Heart right ventricle (tissue), 16 donors: ENCODE measurements at regions of chr6 and their contacts with region 1.

Region 1: GRCh38 chr6:1604158-1605030 is 5.3 kb upstream of the FOXC1 start:
- DNase-seq: peak in 1 of 2 donors; percentile 80
- ATAC-seq: peak; percentile 90 to 94 (median 92)
- H3K4me3 ChIP-seq: peak overlapping the region; percentile 0 to 66 (median 58)
- H3K27ac ChIP-seq: no peak overlapping the region
- H3K4me1 ChIP-seq: peaks cover 3 to 46% (median 22%) of the 10 kb centered on the region in 9 donors
- H3K27me3 ChIP-seq: peaks cover 16 to 99% (median 79%) of the 10 kb centered on the region in 7 donors
- CTCF ChIP-seq: peak; percentile 89 to 99 (median 98)

Region 2: DNA sequence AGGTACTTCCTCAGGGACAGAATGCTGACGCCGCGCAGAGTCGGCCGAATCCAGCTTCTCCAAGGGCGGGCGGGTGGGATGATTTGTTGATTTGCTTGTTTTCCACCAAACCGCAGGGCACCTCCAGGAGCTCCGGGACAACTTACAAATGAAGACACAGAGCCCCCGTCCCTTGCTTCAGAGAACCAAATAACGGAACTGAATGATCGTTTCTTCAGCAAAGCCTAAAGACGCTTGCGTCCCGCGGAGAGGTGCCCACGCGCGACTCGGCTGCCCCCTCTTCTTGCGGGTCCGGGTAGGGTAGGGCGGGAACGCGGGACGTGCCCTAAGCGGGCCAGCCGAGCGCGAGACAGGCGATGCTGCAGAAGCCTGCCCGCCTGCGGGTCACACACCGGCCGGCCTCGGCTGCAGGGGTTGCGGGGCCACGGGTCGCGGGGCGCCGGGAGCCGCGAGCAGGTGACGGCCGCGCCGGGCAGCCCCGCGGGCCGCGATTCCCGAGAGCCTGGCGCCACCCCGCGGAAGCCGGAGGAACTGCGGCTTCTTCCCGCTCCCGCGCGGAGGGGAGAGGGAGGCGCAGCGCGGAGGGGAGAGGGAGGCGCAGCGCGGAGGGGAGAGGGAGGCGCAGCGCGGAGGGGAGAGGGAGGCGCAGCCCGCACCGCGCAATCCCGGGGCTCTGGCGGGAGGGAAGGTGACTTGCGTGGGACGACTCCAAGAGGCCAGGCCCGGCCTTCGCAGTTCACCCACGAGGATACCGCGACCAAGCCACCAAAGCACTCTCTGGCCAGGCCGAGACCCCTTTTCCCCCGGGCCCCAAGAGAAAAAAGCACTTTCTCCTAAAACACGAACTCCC is 222.7 kb before region 1 on chr6:
- intact Hi-C with region 1: no loop called
- DNase-seq: peak; percentile 29 to 55
- ATAC-seq: peak; percentile 77 to 88 (median 85)
- H3K4me3 ChIP-seq: peak overlapping the region in 9 of 10 donors; percentile 16 to 39 (median 31)
- H3K27ac ChIP-seq: no peak overlapping the region
- H3K4me1 ChIP-seq: peaks cover 8 to 59% (median 40%) of the 10 kb centered on the region in 9 donors
- H3K27me3 ChIP-seq: peaks cover 67 to 100% (median 100%) of the 10 kb centered on the region in 7 donors
- CTCF ChIP-seq: peak; percentile 68 to 93 (median 83)

Region 3: DNA sequence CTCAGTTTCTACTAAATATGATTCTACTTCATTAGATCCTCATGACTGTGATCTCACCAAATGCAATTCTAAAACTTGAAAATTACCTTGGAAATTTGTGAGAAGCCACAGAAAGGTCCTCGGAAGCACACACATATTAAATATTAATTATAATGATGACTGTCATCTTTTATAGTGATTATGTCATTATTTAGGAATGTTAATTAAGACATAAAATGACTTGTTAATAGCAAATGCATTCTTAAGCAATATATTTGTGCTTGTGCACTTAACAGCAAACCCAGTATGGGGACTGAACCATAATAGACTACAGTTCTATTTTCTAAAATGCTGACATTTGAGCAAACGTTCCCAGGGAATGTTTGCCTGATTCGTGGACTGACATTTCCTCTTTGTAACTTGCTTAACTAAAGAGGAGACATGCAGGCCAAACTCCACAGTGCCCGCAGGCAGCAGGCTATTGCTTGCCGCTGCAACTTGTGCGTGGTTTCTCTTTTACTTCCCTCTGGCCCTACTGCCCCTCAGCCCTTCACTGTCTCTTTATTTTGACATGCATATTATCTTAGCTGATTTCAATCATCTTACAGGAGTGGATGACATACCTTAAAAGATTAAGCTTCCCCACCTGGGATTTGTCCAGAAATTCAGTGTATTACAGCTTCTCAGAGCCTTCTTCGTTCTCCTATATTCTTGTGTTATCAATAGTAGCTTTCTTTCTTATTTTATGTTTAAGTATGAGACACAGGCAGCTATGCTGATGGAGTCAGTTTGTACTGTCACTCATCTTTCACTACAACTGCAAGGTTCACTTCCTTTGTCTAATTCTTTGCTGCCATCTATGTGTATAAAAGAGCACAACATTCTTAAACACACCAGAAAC is 499.5 kb after region 1 on chr6:
- intact Hi-C with region 1: loop called (anchors 1 to 5 kb)
- DNase-seq: no peak
- ATAC-seq: peak in 7 of 8 donors; percentile 75 to 83 (median 79)
- H3K4me3 ChIP-seq: peak overlapping the region in 4 of 10 donors; percentile 5 to 26 (median 14)
- H3K27ac ChIP-seq: peak overlapping the region in 2 of 10 donors; percentile 17 to 24
- H3K4me1 ChIP-seq: peaks cover 0 to 10% (median 0%) of the 10 kb centered on the region in 9 donors
- H3K27me3 ChIP-seq: no peaks in the 10 kb centered on the region
- CTCF ChIP-seq: peak in 8 of 9 donors; percentile 30 to 77 (median 65)

Region 4: DNA sequence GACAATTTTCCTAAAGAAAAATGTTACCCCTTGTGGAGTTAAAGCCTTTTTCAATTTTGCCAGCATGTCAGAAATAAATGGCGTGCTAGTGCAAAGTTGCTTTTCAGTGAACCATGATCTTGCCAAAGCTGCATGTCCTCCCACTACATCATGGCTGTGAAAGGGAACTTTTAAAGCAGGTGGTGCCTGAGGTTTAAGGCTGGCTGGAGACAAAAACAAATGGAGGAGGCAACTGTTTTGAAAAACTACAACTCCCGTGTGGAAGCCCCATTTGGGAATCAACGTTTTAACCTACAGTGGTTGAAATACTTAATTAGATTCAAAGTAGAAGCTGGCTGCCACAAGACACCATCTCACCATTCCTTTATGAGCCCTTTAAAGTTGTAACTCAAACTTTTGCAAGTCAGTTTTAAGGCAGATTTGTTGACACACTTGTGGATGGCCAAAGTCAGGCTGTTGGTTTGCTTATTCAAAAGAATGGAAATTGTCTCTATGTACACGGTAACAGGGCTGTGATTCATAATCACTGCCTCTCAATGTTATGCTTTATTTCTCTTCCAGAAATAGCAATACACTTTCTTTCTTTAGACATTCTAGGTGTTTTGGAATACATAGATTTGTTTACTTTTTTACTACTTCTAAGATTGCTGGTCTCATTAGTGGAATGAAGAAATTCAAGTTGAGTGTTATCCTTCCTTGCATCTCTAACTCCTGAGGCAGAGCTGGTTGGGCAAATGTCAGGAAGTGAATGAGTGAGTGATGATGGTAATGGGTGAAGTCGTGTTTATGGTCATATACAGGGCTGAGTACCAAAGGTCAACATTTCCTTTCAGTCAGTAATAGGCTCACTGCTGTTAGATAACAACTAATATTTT is 837.4 kb after region 1 on chr6:
- intact Hi-C with region 1: loop called in 5 of 10 experiments (anchors 5 to 10 kb)
- DNase-seq: no peak
- ATAC-seq: no peak
- H3K4me3 ChIP-seq: no peak overlapping the region
- H3K27ac ChIP-seq: no peak overlapping the region
- H3K4me1 ChIP-seq: no peaks in the 10 kb centered on the region
- H3K27me3 ChIP-seq: no peaks in the 10 kb centered on the region
- CTCF ChIP-seq: no peak

Region 5: GRCh38 chr6:2448820-2449571 is 844.6 kb after region 1 on chr6:
- intact Hi-C with region 1: loop called in 6 of 10 experiments (anchors 5 to 10 kb)
- DNase-seq: peak in 1 of 2 donors; percentile 36
- ATAC-seq: peak in 5 of 8 donors; percentile 61 to 71 (median 67)
- H3K4me3 ChIP-seq: peak overlapping the region in 5 of 10 donors; percentile 5 to 28 (median 18)
- H3K27ac ChIP-seq: no peak overlapping the region
- H3K4me1 ChIP-seq: peaks cover 0 to 19% (median 10%) of the 10 kb centered on the region in 9 donors
- H3K27me3 ChIP-seq: no peaks in the 10 kb centered on the region
- CTCF ChIP-seq: peak in 8 of 9 donors; percentile 21 to 73 (median 65)

Region 6: GRCh38 chr6:2641044-2641725 is 1036.8 kb after region 1 on chr6:
- intact Hi-C with region 1: loop called in 2 of 10 experiments (anchors 5 kb)
- DNase-seq: no peak
- ATAC-seq: no peak
- H3K4me3 ChIP-seq: no peak overlapping the region
- H3K27ac ChIP-seq: no peak overlapping the region
- H3K4me1 ChIP-seq: no peaks in the 10 kb centered on the region
- H3K27me3 ChIP-seq: peaks cover 0 to 21% (median 3%) of the 10 kb centered on the region in 7 donors
- CTCF ChIP-seq: no peak